Activated CD8-positive, alpha-beta memory T cell treated with anti-CD3 and anti-CD28 coated beads, Interleukin-2, amount 10 ng/mL, durations not matched to agents 7 days and 5 days (primary cell): ENCODE measurements at regions of chr13 and their contacts with region 1.

Region 1: DNA sequence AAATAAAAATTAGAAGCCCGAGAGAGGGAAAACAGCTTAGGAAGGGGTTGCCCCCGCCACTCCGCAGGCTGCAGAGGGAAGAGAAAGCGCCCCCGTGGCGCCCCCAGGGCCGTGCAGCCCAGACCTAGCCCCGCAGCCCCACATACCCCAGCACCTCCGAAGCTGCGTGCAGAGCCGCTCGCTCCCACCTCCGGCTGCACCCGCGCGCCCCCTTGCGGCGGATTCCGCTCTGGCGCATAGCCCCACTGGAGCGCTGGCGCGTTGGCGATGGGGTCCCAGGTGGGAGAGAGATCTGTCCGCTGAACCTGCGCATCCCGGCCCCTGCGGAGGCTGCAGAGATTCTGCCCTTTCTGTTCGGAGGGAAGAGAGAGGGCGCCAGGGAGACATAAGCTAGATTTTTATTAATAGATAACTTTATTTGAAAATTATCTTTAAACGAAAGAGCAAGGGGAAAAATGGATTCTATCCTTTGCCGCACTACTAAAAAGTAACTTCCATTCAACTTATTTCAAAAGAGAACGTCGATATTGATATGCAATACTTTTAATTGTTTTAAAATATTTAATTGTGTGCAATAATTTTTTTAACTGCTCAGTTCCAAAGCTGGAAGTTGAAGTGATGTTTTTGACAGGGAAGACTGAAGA is 11.7 kb upstream of the CLN5 start:
- DNase-seq: peak; percentile 86
- ATAC-seq: peak; percentile 100
- H3K4me3 Mint-ChIP-seq: no peak overlapping the region
- H3K27ac Mint-ChIP-seq: no peak overlapping the region
- H3K4me1 Mint-ChIP-seq: peaks cover 8% of the 10 kb centered on the region
- H3K27me3 Mint-ChIP-seq: peaks cover 73% of the 10 kb centered on the region

Region 2: DNA sequence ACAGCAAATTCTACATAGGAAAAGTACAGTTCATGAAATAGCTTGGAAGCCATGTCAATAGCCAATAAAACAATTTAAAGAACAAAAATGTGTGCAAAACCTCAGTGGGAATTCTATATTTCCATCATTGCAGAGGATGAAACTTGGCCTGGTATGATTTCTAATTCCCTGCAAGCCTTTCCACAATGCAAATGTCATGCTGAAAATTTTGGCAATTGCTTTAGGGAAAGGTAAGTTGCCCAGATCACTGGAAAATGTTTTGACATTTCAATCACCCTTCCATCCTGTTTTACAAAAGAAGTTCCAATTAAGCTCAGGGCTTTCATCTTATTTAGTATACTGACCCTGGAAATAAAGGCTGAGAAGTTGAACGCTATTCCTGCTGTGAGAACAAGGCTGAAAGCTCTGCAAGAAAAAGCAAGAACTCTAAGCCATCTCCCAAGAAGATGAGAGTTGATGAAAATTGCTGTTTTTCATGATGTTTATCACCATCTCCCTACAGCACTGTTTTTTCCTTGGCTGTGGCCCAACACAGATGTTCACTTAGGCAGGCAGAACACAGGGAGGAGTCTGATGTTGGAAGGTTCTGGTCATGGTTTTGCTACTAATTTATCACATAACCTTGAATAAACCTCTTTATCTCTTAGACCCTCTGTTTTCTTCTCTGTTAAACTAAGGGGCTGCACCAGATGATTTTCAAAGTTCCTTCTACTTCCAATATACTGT is 357.7 kb before region 1 on chr13:
- CTCF ChIA-PET with region 1: no interaction called
- DNase-seq: no peak
- ATAC-seq: no peak
- H3K4me3 Mint-ChIP-seq: no peak overlapping the region
- H3K27ac Mint-ChIP-seq: no peak overlapping the region
- H3K4me1 Mint-ChIP-seq: no peaks in the 10 kb centered on the region
- H3K27me3 Mint-ChIP-seq: no peaks in the 10 kb centered on the region

Region 3: GRCh38 chr13:76886292-76887075 is 93.7 kb before region 1 on chr13 and contains the start of gene KCTD12:
- CTCF ChIA-PET with region 1: interaction called, 14 read pairs
- DNase-seq: peak; percentile 72
- ATAC-seq: peak; percentile 80
- H3K4me3 Mint-ChIP-seq: peak within 1 kb of the TSS; percentile 79
- H3K27ac Mint-ChIP-seq: peak within 1 kb of the TSS; percentile 50
- H3K4me1 Mint-ChIP-seq: peaks cover 20% of the 10 kb centered on the region
- H3K27me3 Mint-ChIP-seq: peaks cover 72% of the 10 kb centered on the region
- total RNA-seq, gene KCTD12: 2.4 to 3.7 TPM

Region 4: DNA sequence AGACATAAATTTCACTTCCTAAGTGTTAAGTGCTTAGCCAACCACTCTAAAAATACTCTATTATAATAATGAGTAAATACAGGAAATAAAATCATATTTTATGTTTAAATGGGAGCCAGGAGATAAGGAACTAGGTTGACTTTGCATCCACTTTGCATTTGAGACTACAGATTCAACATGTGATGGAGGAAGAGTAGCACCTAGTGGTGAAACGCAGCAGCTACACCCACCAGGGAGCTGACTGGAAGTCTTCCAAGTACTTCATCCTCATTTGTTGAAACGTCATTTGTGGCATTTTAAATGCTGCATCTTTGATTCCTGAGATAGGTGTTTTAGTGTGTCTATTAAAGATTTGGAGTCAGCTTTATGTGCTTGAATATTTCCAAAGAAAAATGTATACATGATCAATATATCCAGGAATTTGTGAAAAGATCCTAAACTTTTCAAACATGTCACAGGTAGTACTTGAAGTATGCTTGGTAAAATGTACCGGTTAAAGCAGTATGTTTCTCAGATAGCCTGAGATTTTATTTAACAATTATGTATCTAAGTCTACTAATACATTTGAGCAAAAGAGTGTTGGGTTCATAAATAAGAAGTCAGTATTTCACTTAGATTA is 76.5 kb before region 1 on chr13:
- CTCF ChIA-PET with region 1: interaction called, 15 read pairs
- DNase-seq: peak; percentile 78
- ATAC-seq: peak; percentile 75
- H3K4me3 Mint-ChIP-seq: no peak overlapping the region
- H3K27ac Mint-ChIP-seq: no peak overlapping the region
- H3K4me1 Mint-ChIP-seq: no peaks in the 10 kb centered on the region
- H3K27me3 Mint-ChIP-seq: peaks cover 57% of the 10 kb centered on the region

Region 5: GRCh38 chr13:76969493-76970369 is 10.5 kb before region 1 on chr13:
- CTCF ChIA-PET with region 1: interaction called, 19 read pairs
- DNase-seq: no peak
- ATAC-seq: no peak
- H3K4me3 Mint-ChIP-seq: no peak overlapping the region
- H3K27ac Mint-ChIP-seq: no peak overlapping the region
- H3K4me1 Mint-ChIP-seq: peaks cover 9% of the 10 kb centered on the region
- H3K27me3 Mint-ChIP-seq: peaks cover 52% of the 10 kb centered on the region

Region 6: DNA sequence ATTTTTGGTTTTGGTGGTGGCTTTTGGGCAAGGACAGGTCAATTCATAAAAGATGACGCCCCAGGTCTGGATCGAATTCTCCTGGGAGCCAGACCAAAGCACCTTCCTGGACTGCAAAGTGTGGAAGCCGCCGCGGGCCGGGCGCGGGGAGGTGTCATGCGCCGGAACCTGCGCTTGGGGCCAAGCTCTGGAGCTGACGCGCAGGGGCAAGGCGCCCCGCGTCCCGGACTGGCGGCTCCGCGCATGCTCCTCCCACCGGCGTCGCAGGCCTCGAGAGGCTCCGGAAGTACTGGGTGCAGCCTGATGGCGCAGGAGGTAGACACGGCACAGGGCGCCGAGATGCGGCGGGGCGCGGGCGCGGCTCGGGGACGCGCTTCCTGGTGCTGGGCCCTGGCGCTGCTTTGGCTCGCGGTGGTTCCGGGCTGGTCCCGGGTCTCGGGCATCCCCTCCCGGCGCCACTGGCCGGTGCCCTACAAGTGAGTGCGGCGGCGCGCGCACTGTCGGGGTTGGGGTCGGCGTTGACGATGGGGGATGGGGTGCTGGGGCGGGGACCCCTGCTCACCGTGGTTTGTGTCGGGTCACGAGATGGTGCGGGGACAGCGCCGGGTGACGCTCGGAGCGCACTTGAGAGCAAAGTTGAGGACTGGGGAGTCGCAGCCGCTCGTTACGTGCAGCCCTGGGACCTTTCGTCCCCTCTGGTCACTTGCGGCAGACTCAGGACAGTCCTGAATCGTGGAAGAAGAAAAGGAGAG is 11.8 kb after region 1 on chr13 and contains the start of gene CLN5:
- CTCF ChIA-PET with region 1: interaction called, 28 read pairs
- DNase-seq: peak; percentile 97
- ATAC-seq: peak; percentile 93
- H3K4me3 Mint-ChIP-seq: peak within 1 kb of the TSS; percentile 92
- H3K27ac Mint-ChIP-seq: peak within 1 kb of the TSS; percentile 99
- H3K4me1 Mint-ChIP-seq: peaks cover 37% of the 10 kb centered on the region
- H3K27me3 Mint-ChIP-seq: peaks cover 35% of the 10 kb centered on the region
- total RNA-seq, gene CLN5: 8.3 to 8.4 TPM

Region 7: DNA sequence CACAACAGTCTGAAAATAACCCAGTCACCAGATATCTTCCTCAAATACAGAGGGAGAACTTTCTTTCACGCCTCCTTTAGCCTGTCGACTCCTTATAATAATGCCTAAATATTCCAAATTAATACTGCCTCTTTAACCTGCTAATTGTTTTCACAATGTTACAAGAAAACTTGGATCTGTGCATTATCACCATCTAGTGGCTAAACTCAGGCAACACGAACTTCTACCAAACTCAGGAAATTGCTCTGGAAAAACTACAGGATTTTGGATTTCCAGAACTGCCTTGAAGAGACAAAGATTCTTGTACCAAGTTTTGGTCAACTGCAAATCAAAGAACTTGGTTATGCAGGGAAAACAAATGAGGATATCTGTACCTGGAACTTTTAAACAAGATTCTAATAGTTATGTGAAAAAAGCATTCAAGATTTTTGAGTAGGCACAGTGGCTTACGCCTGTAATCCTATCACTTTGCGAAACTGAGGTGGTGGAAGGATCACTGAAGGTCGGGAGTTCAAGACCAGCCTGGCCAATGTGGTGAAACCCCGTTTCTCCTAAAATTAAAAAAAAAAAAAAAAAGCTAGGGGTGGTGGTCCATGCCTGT is 22.5 kb after region 1 on chr13:
- CTCF ChIA-PET with region 1: interaction called, 14 read pairs
- DNase-seq: no peak
- ATAC-seq: no peak
- H3K4me3 Mint-ChIP-seq: no peak overlapping the region
- H3K27ac Mint-ChIP-seq: peak overlapping the region; percentile 15
- H3K4me1 Mint-ChIP-seq: peaks cover 16% of the 10 kb centered on the region
- H3K27me3 Mint-ChIP-seq: no peaks in the 10 kb centered on the region

Region 8: GRCh38 chr13:77184455-77184854 is 204.3 kb after region 1 on chr13:
- CTCF ChIA-PET with region 1: no interaction called
- DNase-seq: peak; percentile 63
- ATAC-seq: peak; percentile 85
- H3K4me3 Mint-ChIP-seq: no peak overlapping the region
- H3K27ac Mint-ChIP-seq: peak overlapping the region; percentile 76
- H3K4me1 Mint-ChIP-seq: peaks cover 18% of the 10 kb centered on the region
- H3K27me3 Mint-ChIP-seq: no peaks in the 10 kb centered on the region